CD8-positive, alpha-beta T cell (primary cell): ENCODE measurements at regions of chr4 and their contacts with region 1.

Region 1: GRCh38 chr4:1167247-1167949 is 5.0 kb downstream of the SPON2 start:
- DNase-seq: peak; percentile 79 to 98 (median 91)
- ATAC-seq: peak; percentile 84
- H3K4me3 ChIP-seq: peak overlapping the region; percentile 92 to 97
- H3K4me3 Mint-ChIP-seq: peak overlapping the region; percentile 88
- H3K27ac ChIP-seq: peak overlapping the region; percentile 70 to 85
- H3K27ac Mint-ChIP-seq: peak overlapping the region; percentile 83
- H3K4me1 ChIP-seq: peaks cover 28% of the 10 kb centered on the region
- H3K4me1 Mint-ChIP-seq: peaks cover 26% of the 10 kb centered on the region
- H3K27me3 ChIP-seq: peaks cover 11 to 13% of the 10 kb centered on the region in 2 experiments
- H3K27me3 Mint-ChIP-seq: peaks cover 7% of the 10 kb centered on the region
- CTCF ChIP-seq: peak; percentile 97

Region 2: GRCh38 chr4:1011022-1011694 is 156.2 kb before region 1 on chr4 and contains the start of gene FGFRL1:
- CTCF ChIA-PET with region 1: no interaction called
- POLR2A ChIA-PET with region 1: no interaction called
- intact Hi-C with region 1: loop called in 1 of 2 experiments (anchors 5 kb)
- DNase-seq: peak; percentile 83 to 94 (median 93)
- ATAC-seq: peak; percentile 55
- H3K4me3 ChIP-seq: peak within 1 kb of the TSS; percentile 65 to 86
- H3K4me3 Mint-ChIP-seq: peak within 1 kb of the TSS; percentile 89
- H3K27ac ChIP-seq: peak within 1 kb of the TSS; percentile 65 to 71
- H3K27ac Mint-ChIP-seq: peak within 1 kb of the TSS; percentile 96
- H3K4me1 ChIP-seq: peaks cover 26% of the 10 kb centered on the region
- H3K4me1 Mint-ChIP-seq: peaks cover 12% of the 10 kb centered on the region
- H3K27me3 ChIP-seq: peaks cover 0 to 9% of the 10 kb centered on the region in 2 experiments
- H3K27me3 Mint-ChIP-seq: peaks cover 25% of the 10 kb centered on the region
- CTCF ChIP-seq: no peak
- total RNA-seq, gene FGFRL1: 26.3 to 30.2 TPM

Region 3: DNA sequence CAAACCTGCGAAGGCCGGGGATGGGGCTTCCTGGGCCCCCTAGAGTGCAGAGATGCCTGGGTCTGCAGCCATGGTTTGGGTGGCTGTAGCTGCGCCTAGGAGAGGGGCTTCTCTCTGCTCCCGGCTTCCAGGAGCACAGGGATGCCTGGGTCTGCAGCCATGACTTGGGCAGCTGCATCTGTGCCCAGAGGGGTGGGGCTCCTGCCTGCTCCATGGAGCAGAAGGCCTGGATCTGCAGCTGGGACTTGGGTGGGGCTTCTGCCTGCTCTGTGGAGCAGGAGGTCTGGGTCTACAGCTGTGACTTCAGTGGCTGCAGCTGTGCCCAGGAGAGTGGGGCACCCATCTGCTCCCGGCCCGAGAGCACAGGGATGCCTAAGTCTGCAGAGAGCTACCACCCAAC is 15.9 kb before region 1 on chr4:
- CTCF ChIA-PET with region 1: interaction called, 16 read pairs
- POLR2A ChIA-PET with region 1: no interaction called
- intact Hi-C with region 1: no loop called
- DNase-seq: no peak
- ATAC-seq: no peak
- H3K4me3 ChIP-seq: no peak overlapping the region
- H3K4me3 Mint-ChIP-seq: no peak overlapping the region
- H3K27ac ChIP-seq: no peak overlapping the region
- H3K27ac Mint-ChIP-seq: no peak overlapping the region
- H3K4me1 ChIP-seq: no peaks in the 10 kb centered on the region
- H3K4me1 Mint-ChIP-seq: no peaks in the 10 kb centered on the region
- H3K27me3 ChIP-seq: peaks cover 0 to 4% of the 10 kb centered on the region in 2 experiments
- H3K27me3 Mint-ChIP-seq: peaks cover 2% of the 10 kb centered on the region
- CTCF ChIP-seq: no peak

Region 4: GRCh38 chr4:1200425-1201035 is 33.1 kb after region 1 on chr4:
- CTCF ChIA-PET with region 1: interaction called, 33 read pairs
- POLR2A ChIA-PET with region 1: interaction called, 10 read pairs
- intact Hi-C with region 1: loop called (anchors 1 kb)
- DNase-seq: peak in 6 of 9 experiments; percentile 25 to 71 (median 54)
- ATAC-seq: no peak
- H3K4me3 ChIP-seq: peak overlapping the region; percentile 69 to 90
- H3K4me3 Mint-ChIP-seq: peak overlapping the region; percentile 87
- H3K27ac ChIP-seq: peak overlapping the region; percentile 87 to 91
- H3K27ac Mint-ChIP-seq: peak overlapping the region; percentile 95
- H3K4me1 ChIP-seq: peaks cover 47% of the 10 kb centered on the region
- H3K4me1 Mint-ChIP-seq: peaks cover 53% of the 10 kb centered on the region
- H3K27me3 ChIP-seq: no peaks in the 10 kb centered on the region
- H3K27me3 Mint-ChIP-seq: no peaks in the 10 kb centered on the region
- CTCF ChIP-seq: no peak

Region 5: GRCh38 chr4:1266881-1267763 is 99.7 kb after region 1 on chr4:
- CTCF ChIA-PET with region 1: interaction called, 90 read pairs
- POLR2A ChIA-PET with region 1: interaction called, 7 read pairs
- intact Hi-C with region 1: loop called (anchors 1 kb)
- DNase-seq: peak in 2 of 9 experiments; percentile 23 to 64
- ATAC-seq: peak; percentile 78
- H3K4me3 ChIP-seq: peak overlapping the region in 1 of 2 experiments; percentile 46
- H3K4me3 Mint-ChIP-seq: peak overlapping the region; percentile 76
- H3K27ac ChIP-seq: peak overlapping the region; percentile 57 to 73
- H3K27ac Mint-ChIP-seq: peak overlapping the region; percentile 93
- H3K4me1 ChIP-seq: peaks cover 12% of the 10 kb centered on the region
- H3K4me1 Mint-ChIP-seq: peaks cover 20% of the 10 kb centered on the region
- H3K27me3 ChIP-seq: no peaks in the 10 kb centered on the region
- H3K27me3 Mint-ChIP-seq: no peaks in the 10 kb centered on the region
- CTCF ChIP-seq: no peak

Region 6: GRCh38 chr4:1533401-1534064 is 366.1 kb after region 1 on chr4:
- CTCF ChIA-PET with region 1: no interaction called
- POLR2A ChIA-PET with region 1: no interaction called
- intact Hi-C with region 1: no loop called
- DNase-seq: peak in 1 of 9 experiments; percentile 0
- ATAC-seq: no peak
- H3K4me3 ChIP-seq: no peak overlapping the region
- H3K4me3 Mint-ChIP-seq: no peak overlapping the region
- H3K27ac ChIP-seq: no peak overlapping the region
- H3K27ac Mint-ChIP-seq: no peak overlapping the region
- H3K4me1 ChIP-seq: no peaks in the 10 kb centered on the region
- H3K4me1 Mint-ChIP-seq: no peaks in the 10 kb centered on the region
- H3K27me3 ChIP-seq: peaks cover 0 to 4% of the 10 kb centered on the region in 2 experiments
- H3K27me3 Mint-ChIP-seq: peaks cover 15% of the 10 kb centered on the region
- CTCF ChIP-seq: no peak

Region 7: DNA sequence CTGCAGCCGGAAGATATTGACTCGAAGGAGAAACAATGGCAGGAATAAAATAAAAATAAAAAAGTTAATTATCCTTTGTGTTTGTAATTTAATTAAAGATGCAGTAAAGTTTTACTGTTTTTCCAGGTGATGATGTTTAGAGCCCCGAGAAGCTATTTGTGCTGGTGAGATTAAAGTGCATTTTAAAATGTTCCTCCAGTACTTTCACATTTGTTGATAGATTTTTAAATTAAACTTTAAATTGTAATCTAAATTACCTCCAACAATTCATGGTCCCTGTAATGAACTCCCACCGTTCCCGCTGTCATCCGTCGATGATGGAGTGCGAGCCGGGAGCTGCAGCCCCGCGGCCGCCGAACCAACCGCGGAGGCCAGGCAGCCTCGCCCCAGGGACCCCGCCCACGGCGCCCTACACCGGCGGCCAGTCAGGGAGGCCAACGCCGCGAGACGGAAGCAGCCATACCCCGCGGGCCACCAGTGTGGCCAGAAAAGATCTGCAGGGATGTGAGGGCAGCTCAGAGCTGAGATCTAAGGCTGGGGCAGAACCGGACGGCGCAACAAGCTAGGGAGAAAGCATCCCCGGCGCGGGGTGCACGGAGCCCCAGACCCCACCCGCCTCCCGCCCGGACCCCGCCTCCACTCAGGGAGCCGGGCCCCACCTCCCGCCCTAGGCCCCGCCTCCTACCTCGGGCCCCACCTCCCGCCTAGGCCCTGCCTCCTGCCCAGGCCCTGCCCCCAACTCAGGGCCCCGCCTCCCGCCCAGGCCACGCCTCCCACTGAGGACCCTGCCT is 412.7 kb after region 1 on chr4:
- CTCF ChIA-PET with region 1: no interaction called
- POLR2A ChIA-PET with region 1: no interaction called
- intact Hi-C with region 1: loop called in 1 of 2 experiments (anchors 1 kb)
- DNase-seq: peak; percentile 83 to 96 (median 93)
- ATAC-seq: peak; percentile 82
- H3K4me3 ChIP-seq: peak overlapping the region; percentile 70 to 78
- H3K4me3 Mint-ChIP-seq: peak overlapping the region; percentile 79
- H3K27ac ChIP-seq: peak overlapping the region; percentile 66 to 73
- H3K27ac Mint-ChIP-seq: peak overlapping the region; percentile 79
- H3K4me1 ChIP-seq: no peaks in the 10 kb centered on the region
- H3K4me1 Mint-ChIP-seq: peaks cover 11% of the 10 kb centered on the region
- H3K27me3 ChIP-seq: no peaks in the 10 kb centered on the region
- H3K27me3 Mint-ChIP-seq: no peaks in the 10 kb centered on the region
- CTCF ChIP-seq: no peak